ENCODE measurements at regions of chr4 and their contacts with region 1.

Region 1: DNA sequence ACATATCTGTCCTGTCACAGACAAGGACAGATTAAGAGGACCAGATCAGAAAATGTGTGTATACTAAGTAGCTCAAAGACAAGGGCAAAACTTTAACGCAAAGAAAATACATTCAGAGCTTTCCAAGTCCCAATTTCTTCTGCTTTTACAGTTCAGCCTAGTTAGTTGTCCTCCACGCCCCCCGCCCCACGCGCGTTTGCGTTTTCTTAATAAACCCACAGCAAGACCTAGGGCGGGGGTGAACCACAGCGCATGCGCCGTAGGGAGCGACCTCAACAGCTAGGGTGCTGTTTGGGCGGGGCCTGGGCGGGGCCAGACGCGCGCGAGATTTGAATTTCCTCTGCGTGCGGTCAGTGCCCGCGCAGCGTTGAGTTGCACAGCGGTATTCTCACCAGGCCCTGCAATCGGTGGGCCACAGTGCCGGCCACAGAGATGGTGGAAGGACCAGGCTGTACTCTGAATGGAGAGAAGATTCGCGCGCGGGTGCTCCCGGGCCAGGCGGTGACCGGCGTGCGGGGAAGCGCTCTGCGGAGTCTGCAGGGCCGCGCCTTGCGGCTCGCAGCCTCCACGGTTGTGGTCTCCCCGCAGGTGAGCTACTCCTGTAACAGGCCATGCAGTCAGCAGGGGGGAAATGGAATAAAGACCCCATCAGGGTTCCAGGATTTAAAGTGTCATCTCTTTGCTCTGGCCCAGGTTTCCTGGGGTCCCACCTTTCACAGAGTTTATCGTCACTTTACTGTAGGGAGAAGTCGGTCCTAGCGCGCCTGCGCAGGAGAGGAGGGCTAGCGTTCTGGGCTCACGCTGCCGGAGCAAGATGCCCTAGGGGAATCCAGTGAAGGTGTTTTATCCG is at the start of gene NEIL3:
- DNase-seq: peak; percentile 89
- ATAC-seq: peak; percentile 95
- H3K4me3 Mint-ChIP-seq: peak within 1 kb of the TSS; percentile 93
- H3K27ac Mint-ChIP-seq: peak within 1 kb of the TSS; percentile 92
- H3K4me1 Mint-ChIP-seq: peaks cover 8% of the 10 kb centered on the region; the same call in 1 of the 2 replicates
- H3K27me3 Mint-ChIP-seq: no peaks in the 10 kb centered on the region
- CTCF ChIP-seq: no peak
- total RNA-seq, gene NEIL3: 9.9 to 13.5 TPM (median 12.0 TPM) in 3 replicates

Region 2: DNA sequence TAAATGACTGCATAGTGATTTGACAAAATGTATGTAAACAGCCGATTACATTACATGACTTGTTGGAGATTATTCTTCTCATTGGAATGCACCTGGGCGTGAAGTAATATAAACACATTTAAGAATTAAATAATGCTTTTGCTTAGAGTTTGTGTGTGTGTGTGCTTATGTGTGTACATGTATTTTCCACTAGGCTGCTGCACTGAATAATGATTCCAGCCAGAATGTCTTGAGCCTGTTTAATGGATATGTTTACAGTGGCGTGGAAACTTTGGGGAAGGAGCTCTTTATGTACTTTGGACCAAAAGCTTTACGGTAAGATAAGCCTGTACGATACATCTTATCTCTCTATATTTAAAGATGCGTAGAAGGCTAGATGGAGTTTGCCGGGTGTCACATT is 12.5 kb after region 1 on chr4:
- CTCF ChIA-PET with region 1: no interaction called
- POLR2A ChIA-PET with region 1: no interaction called
- DNase-seq: no peak
- ATAC-seq: no peak
- H3K4me3 Mint-ChIP-seq: no peak overlapping the region
- H3K27ac Mint-ChIP-seq: 0 out of 2 replicates have a peak overlapping the region, but pooled peaks have one; percentile 54
- H3K4me1 Mint-ChIP-seq: peaks cover 7% of the 10 kb centered on the region; the same call in 1 of the 2 replicates
- H3K27me3 Mint-ChIP-seq: no peaks in the 10 kb centered on the region
- CTCF ChIP-seq: no peak

Region 3: GRCh38 chr4:177367336-177367735 is 57.6 kb after region 1 on chr4:
- CTCF ChIA-PET with region 1: no interaction called
- POLR2A ChIA-PET with region 1: interaction called, 11 read pairs
- DNase-seq: peak; percentile 20
- ATAC-seq: peak; percentile 99
- H3K4me3 Mint-ChIP-seq: no peak overlapping the region
- H3K27ac Mint-ChIP-seq: 0 out of 2 replicates have a peak overlapping the region, but pooled peaks have one; percentile 29
- H3K4me1 Mint-ChIP-seq: peaks cover 4% of the 10 kb centered on the region
- H3K27me3 Mint-ChIP-seq: no peaks in the 10 kb centered on the region
- CTCF ChIP-seq: no peak

Region 4: DNA sequence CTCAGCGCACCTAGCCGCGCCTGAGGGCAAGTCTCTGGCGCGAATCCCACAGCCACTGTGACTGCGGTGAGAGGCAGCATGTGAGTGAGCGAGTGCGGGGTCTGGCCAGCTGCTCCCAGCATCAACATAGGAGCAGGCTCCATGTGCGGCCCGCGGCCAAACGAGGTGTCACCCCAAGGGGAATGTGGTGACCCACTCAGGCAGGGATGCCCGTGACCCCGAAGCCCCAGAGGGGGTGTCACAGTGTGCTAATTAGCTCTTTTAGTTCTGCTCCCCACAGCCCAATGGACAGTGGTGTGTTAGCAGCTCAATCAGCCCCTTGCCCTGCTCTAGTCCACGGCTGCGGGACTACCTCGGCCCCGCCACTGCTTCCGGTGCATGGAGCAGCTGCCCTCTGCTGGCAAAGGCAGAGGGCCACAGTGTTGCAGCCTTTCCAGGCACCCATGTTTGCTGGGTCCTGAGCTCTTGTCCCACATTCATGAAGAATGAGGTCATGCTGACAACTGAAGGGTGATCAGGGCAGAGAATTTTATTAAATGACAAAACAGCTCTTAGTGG is 71.1 kb after region 1 on chr4:
- CTCF ChIA-PET with region 1: interaction called, 11 read pairs
- POLR2A ChIA-PET with region 1: no interaction called
- DNase-seq: peak; percentile 71
- ATAC-seq: peak; percentile 99
- H3K4me3 Mint-ChIP-seq: no peak overlapping the region
- H3K27ac Mint-ChIP-seq: no peak overlapping the region
- H3K4me1 Mint-ChIP-seq: peaks cover 8% of the 10 kb centered on the region
- H3K27me3 Mint-ChIP-seq: no peaks in the 10 kb centered on the region
- CTCF ChIP-seq: no peak

Measured in WTC11 (cell line).